ENCODE measurements at regions of chr6 and their contacts with region 1.

Region 1: DNA sequence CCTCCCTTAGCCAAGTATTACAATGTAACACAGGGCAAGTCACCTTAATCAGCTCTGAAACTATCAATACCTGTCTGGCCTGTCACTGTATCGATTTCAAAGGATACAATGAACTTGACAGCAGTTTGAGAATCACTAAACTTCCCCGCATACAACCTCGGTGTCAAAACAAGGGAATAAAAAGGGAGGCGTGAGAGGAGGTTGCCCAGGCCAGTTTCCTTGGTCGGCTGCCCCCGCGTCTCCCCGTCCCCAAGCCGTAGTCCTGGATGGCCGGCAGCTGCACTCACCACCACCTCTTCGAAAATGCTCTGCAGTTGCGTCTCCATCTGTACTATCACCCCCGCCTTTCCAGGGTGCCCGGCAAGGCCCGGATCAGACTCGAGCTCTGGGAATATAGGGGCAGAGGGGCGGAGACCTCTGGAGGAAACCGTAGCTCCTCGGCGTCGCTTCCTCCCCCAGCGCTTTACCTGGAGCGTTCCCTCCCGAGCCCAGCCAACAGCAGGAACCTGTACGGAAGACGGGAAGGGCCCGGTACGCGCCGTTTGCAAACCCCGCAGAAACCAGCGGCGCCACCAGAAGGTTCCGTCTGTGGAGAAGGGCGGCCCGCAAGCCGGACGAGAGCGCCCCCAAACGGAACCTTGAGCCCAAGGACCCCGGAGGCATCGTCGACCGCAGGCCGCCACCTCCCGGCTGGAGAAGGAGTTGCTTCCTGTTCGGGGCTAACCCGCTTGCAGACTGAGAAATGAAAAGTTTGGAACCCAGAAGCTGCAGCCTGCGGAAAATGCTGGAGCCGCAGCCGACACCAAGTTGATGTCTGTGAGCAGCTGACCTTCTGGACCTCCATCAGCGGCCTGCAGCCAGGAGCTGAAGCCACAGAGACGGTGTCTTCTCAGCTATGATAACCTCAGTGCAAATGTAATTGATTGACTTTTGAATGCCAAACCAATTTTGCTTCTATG is at the start of gene MED23:
- DNase-seq: peak; percentile 90 to 94 (median 92)
- H3K4me3 ChIP-seq: peak within 1 kb of the TSS; percentile 91
- H3K4me3 Mint-ChIP-seq: peak within 1 kb of the TSS; percentile 94 to 100 (median 98)
- H3K27ac ChIP-seq: peak within 1 kb of the TSS; percentile 69
- H3K27ac Mint-ChIP-seq: peak within 1 kb of the TSS; percentile 79 to 100 (median 92)
- H3K4me1 ChIP-seq: peaks cover 17% of the 10 kb centered on the region
- H3K4me1 Mint-ChIP-seq: peaks cover 29 to 50% (median 36%) of the 10 kb centered on the region in 3 donors
- H3K27me3 ChIP-seq: no peaks in the 10 kb centered on the region
- H3K27me3 Mint-ChIP-seq: no peaks in the 10 kb centered on the region
- total RNA-seq, gene MED23: 35.1 to 36.4 TPM

Region 2: DNA sequence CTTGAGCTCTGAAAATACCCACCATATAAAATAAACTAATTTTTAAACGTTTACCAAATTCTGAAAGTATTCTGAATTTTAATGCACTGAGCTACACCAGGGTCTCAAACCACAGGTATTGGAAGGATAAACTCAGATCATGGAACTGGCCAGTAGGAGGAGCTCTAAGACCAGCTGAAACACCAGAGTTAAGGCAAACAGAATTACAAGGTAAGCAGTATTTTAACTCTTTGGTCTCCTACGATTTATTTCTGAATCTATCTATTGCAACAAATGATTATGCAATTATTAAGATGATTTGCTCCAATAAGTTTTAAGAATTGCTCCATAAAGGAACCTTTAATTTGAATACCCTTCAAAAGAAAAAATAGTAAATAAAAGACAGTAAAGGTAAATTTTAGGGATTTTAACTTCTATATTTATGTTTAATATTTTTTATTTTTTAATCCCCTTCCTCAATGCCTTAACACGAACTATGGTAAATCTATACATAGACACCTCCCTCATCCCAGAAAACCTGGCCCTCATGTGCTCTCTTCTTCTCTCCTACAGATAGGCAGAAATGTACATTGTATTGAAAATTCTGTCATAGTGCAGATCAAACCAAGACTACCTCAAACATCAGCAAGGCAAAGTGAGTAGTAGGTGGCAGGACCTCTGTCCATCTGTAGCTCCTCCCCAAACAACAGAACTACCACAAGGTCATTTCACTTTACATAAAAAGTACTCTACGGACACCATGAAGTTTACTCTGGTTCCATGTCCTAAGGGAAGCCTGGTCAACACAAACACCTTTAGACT is 742.4 kb before region 1 on chr6:
- CTCF ChIA-PET with region 1: interaction called, 19 read pairs
- POLR2A ChIA-PET with region 1: no interaction called
- DNase-seq: peak; percentile 32 to 77 (median 62)
- H3K4me3 ChIP-seq: no peak overlapping the region
- H3K4me3 Mint-ChIP-seq: no peak overlapping the region
- H3K27ac ChIP-seq: no peak overlapping the region
- H3K27ac Mint-ChIP-seq: no peak overlapping the region
- H3K4me1 ChIP-seq: no peaks in the 10 kb centered on the region
- H3K4me1 Mint-ChIP-seq: no peaks in the 10 kb centered on the region
- H3K27me3 ChIP-seq: no peaks in the 10 kb centered on the region
- H3K27me3 Mint-ChIP-seq: no peaks in the 10 kb centered on the region

Region 3: DNA sequence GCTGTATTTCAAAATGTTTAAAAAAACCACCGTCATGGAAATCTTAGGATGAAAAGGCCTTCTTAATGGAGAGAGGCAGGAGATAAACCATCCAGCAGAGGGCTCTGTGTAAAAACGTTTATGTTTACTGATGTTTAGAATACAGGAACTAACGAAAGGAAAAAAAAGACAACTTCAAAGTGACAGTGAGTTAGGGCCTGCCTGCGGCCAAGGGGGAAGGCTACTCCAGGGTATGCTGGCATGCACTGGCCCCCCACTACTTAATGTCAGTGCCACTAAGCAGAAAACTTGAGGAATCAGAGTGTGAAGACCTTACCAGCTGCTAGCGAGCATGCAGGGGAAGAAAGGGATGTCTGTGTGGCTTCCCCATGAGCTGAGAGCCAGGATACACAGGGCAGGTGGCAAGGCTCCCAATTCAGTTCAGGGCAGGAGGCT is 445.0 kb before region 1 on chr6:
- CTCF ChIA-PET with region 1: interaction called, 16 read pairs
- POLR2A ChIA-PET with region 1: no interaction called
- DNase-seq: peak in 3 of 5 donors; percentile 41 to 56 (median 47)
- H3K4me3 ChIP-seq: no peak overlapping the region
- H3K4me3 Mint-ChIP-seq: peak overlapping the region in 6 of 7 donors; percentile 38 to 91 (median 64)
- H3K27ac ChIP-seq: no peak overlapping the region
- H3K27ac Mint-ChIP-seq: peak overlapping the region in 7 of 8 donors; percentile 71 to 96 (median 90)
- H3K4me1 ChIP-seq: peaks cover 7% of the 10 kb centered on the region
- H3K4me1 Mint-ChIP-seq: peaks cover 7 to 12% (median 10%) of the 10 kb centered on the region in 3 donors
- H3K27me3 ChIP-seq: no peaks in the 10 kb centered on the region
- H3K27me3 Mint-ChIP-seq: no peaks in the 10 kb centered on the region

Region 4: GRCh38 chr6:131615275-131615674 is 12.7 kb before region 1 on chr6:
- CTCF ChIA-PET with region 1: interaction called, 27 read pairs
- POLR2A ChIA-PET with region 1: no interaction called
- DNase-seq: no peak
- H3K4me3 ChIP-seq: no peak overlapping the region
- H3K4me3 Mint-ChIP-seq: no peak overlapping the region
- H3K27ac ChIP-seq: no peak overlapping the region
- H3K27ac Mint-ChIP-seq: no peak overlapping the region
- H3K4me1 ChIP-seq: no peaks in the 10 kb centered on the region
- H3K4me1 Mint-ChIP-seq: peaks cover 4 to 12% (median 11%) of the 10 kb centered on the region in 3 donors
- H3K27me3 ChIP-seq: no peaks in the 10 kb centered on the region
- H3K27me3 Mint-ChIP-seq: no peaks in the 10 kb centered on the region

Region 5: DNA sequence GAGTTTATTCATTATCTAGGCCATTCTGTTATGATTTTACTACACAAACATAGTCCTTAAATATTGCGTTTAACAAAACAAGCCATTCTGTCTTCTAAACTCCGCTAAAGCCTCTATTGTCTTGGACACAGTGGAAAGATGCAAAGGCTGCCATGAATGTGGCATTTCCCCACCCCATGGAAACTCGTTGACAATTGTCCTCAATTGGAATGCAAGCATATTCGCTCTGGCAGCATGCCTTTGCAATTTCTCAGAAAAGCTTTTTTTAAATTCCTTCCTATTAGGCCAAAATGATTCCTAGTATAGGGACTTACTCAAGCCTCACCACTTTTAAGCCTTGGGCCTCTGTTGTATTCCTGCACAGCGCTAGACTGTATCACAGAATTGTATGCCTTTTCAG is 50.4 kb after region 1 on chr6:
- CTCF ChIA-PET with region 1: no interaction called
- POLR2A ChIA-PET with region 1: no interaction called
- DNase-seq: no peak
- H3K4me3 ChIP-seq: no peak overlapping the region
- H3K4me3 Mint-ChIP-seq: no peak overlapping the region
- H3K27ac ChIP-seq: no peak overlapping the region
- H3K27ac Mint-ChIP-seq: no peak overlapping the region
- H3K4me1 ChIP-seq: no peaks in the 10 kb centered on the region
- H3K4me1 Mint-ChIP-seq: no peaks in the 10 kb centered on the region
- H3K27me3 ChIP-seq: no peaks in the 10 kb centered on the region
- H3K27me3 Mint-ChIP-seq: peaks cover 0 to 2% of the 10 kb centered on the region in 2 donors

Region 6: DNA sequence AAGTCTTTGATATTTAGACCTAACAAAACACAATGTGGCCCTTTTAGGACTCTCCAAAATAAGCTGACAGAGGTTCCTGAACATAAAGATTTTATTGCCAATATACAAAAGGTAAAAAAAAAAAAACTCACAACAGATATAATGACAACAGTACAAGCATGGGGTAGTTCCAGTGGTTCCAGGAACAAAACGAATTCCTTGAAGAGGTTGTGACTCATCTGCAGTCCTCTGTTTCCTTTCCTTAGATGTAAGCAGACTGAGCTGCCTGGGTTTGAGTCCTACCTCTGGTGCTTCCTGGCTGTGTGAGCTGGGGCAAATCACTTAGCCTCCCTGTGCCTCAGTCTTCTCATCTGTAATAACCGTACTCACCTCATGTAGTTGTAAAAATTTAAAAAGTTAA is 96.1 kb after region 1 on chr6:
- CTCF ChIA-PET with region 1: no interaction called
- POLR2A ChIA-PET with region 1: no interaction called
- DNase-seq: no peak
- H3K4me3 ChIP-seq: no peak overlapping the region
- H3K4me3 Mint-ChIP-seq: no peak overlapping the region
- H3K27ac ChIP-seq: no peak overlapping the region
- H3K27ac Mint-ChIP-seq: no peak overlapping the region
- H3K4me1 ChIP-seq: no peaks in the 10 kb centered on the region
- H3K4me1 Mint-ChIP-seq: no peaks in the 10 kb centered on the region
- H3K27me3 ChIP-seq: no peaks in the 10 kb centered on the region
- H3K27me3 Mint-ChIP-seq: no peaks in the 10 kb centered on the region

Region 7: DNA sequence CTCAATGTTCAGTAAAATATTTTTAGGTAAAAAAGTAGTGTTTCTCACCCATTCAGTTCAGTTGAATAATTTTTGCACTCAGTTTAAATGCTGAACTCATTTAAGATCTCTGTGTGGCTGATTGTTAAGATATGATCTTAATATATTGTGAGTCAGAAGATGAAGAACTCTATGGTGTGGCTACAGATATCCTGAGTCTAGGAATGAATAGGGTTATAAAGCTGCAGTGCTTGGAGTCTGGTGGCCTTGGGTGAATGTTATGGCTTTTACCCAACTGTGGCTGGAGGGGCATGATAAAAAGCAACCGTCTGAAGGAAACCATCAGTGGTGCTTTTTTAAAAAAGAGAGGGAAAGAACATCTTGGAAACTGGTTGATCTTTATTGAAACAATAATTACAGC is 257.2 kb after region 1 on chr6:
- CTCF ChIA-PET with region 1: no interaction called
- POLR2A ChIA-PET with region 1: no interaction called
- DNase-seq: no peak
- H3K4me3 ChIP-seq: no peak overlapping the region
- H3K4me3 Mint-ChIP-seq: no peak overlapping the region
- H3K27ac ChIP-seq: no peak overlapping the region
- H3K27ac Mint-ChIP-seq: no peak overlapping the region
- H3K4me1 ChIP-seq: no peaks in the 10 kb centered on the region
- H3K4me1 Mint-ChIP-seq: no peaks in the 10 kb centered on the region
- H3K27me3 ChIP-seq: no peaks in the 10 kb centered on the region
- H3K27me3 Mint-ChIP-seq: peaks cover 2 to 3% of the 10 kb centered on the region in 2 donors